ENCODE measurements at regions of chr2 and their contacts with region 1.

Region 1: GRCh38 chr2:70190418-70191243 is at the start of gene C2orf42:
- DNase-seq: peak; percentile 97
- ATAC-seq: peak; percentile 91
- H3K4me3 ChIP-seq: peak within 1 kb of the TSS; percentile 79
- H3K27ac ChIP-seq: peak within 1 kb of the TSS; percentile 77
- H3K4me1 ChIP-seq: peaks cover 15% of the 10 kb centered on the region
- H3K27me3 ChIP-seq: no peaks in the 10 kb centered on the region
- CTCF ChIP-seq: no peak
- total RNA-seq, gene C2orf42: 17.1 and 21.1 TPM in 2 replicates

Region 2: DNA sequence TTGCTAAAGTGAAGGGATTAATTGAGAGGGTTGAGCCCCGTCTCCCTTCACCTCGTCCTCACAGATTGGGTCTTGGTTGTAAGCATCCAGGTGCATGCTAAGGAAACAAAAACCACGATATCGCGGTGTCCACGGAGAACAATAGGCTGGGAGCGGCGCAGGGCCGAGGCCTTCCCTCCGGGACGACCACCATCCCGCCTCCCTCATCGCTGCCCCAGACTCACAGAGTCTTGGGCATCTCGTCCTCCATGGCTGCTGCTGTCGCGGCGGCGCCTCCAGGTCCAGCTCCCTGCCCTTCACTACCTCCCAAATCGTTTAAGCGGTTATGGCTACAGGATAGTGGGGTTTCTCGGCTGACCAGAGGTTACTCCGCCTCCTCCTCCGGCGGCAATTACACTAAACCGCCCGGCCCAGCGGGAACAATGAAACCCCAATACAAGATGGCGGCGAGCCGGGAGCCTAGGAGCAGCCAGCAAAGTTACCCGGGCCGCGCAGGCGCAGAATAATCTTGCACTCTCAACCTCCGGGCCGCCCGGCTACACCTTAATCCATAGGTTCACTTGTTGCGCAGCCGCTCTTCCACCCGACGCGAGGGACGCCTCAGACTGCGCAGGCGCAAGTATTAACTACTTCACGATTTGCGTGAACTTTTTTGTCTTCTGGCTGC is 57.7 kb after region 1 on chr2 and contains the start of gene TIA1:
- CTCF ChIA-PET with region 1: no interaction called
- POLR2A ChIA-PET with region 1: no interaction called
- intact Hi-C with region 1: loop called (anchors 5 kb)
- DNase-seq: peak; percentile 98
- ATAC-seq: peak; percentile 96
- H3K4me3 ChIP-seq: peak within 1 kb of the TSS; percentile 99
- H3K27ac ChIP-seq: peak within 1 kb of the TSS; percentile 89
- H3K4me1 ChIP-seq: peaks cover 11% of the 10 kb centered on the region
- H3K27me3 ChIP-seq: no peaks in the 10 kb centered on the region
- CTCF ChIP-seq: no peak
- total RNA-seq, gene TIA1: 82.5 and 123 TPM in 2 replicates

Measured in PC-3 (cell line).